ENCODE measurements at regions of chr5 and their contacts with region 1.

Region 1: GRCh38 chr5:174945853-174946252 is 221.5 kb downstream of the MSX2 start:
- DNase-seq: no peak
- ATAC-seq: no peak
- H3K4me3 ChIP-seq: no peak overlapping the region
- H3K27ac ChIP-seq: no peak overlapping the region
- H3K4me1 ChIP-seq: no peaks in the 10 kb centered on the region
- H3K27me3 ChIP-seq: peaks cover 0 to 65% (median 23%) of the 10 kb centered on the region in 7 donors
- CTCF ChIP-seq: no peak

Region 2: DNA sequence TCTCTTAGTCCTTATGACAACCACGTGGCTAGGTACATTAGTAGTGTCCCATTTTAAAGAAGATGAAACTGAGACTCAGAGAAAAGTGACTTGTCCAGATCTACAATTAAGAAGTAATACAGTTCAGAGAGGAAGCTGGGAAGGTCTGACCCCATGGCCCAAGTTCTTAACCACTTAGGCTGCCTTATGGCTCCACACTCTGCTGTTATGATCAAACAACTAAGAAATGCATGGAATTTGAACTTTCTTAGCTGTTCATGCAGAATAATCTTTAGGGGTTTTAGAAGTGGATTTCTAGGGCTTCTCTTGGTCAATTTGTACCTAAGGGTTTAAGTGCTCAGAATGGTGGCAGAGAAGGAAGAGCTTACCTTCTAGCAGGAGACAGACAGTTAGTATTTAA is 349.4 kb before region 1 on chr5:
- intact Hi-C with region 1: no loop called
- DNase-seq: no peak
- ATAC-seq: no peak
- H3K4me3 ChIP-seq: no peak overlapping the region
- H3K27ac ChIP-seq: no peak overlapping the region
- H3K4me1 ChIP-seq: no peaks in the 10 kb centered on the region
- H3K27me3 ChIP-seq: peaks cover 0 to 45% (median 24%) of the 10 kb centered on the region in 7 donors
- CTCF ChIP-seq: no peak

Region 3: DNA sequence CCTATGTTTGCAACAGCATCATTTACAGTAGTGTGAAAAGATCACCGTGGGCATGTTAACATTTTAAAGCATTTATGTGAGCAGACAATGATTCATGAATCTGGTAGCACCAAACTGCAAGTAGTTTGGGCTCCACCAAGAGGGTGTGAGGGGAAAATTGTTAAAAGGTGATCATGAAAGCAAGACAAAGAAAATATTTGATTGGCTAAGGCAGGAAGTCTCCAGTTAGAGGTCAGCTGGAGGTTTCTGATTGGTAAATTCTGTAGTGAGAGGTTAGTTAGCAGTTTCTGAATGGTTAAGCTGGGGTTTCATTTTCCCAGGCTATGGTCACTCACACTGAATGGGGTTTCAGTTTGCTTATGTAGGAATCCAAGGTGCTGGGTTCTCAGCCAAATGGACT is 511.6 kb after region 1 on chr5:
- intact Hi-C with region 1: loop called in 6 of 10 experiments (anchors 5 kb)
- DNase-seq: no peak
- ATAC-seq: no peak
- H3K4me3 ChIP-seq: no peak overlapping the region
- H3K27ac ChIP-seq: no peak overlapping the region
- H3K4me1 ChIP-seq: no peaks in the 10 kb centered on the region
- H3K27me3 ChIP-seq: peaks cover 0 to 61% (median 52%) of the 10 kb centered on the region in 7 donors
- CTCF ChIP-seq: no peak

Region 4: DNA sequence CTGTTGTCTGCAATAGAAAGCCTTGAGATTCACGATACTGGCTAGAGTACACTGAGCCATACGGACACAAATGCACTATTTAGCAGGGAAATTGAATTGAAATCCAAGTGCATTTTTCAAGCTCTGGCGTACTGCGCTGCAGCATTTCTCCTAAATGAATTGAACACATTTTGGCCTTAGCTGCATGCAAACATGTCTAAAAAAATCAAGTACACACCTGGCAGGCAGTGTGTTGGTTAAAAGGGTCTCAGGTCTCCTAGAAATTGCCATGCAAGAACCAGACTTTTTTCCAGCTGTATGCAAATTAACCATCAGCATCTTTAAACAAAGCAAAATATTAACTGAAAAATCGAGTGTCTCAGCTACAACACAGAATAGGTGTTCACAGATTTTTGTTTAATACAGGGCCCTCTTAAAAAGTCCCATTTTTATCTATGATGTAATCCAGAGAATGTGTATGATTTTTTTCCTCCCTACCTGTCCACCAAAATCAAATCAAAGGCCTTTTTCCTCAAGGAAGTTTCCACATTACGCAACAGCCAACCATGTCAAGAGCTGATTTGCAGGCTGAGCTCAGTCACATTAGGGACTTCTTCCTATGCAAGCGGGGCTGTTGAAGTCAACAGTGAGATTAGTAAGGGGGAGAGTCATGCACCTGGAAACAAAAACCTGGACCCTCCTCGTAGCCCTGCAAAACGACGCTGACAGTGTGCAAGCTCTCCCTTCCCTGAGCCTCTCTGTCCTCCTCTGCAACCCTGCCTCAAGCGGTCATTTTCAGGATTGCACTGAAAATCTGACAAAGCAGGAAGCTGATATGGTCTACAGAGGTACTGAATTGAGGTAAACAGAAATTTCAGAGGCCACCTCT is 518.5 kb after region 1 on chr5:
- intact Hi-C with region 1: loop called in 6 of 10 experiments (anchors 5 kb)
- DNase-seq: no peak
- ATAC-seq: peak in 4 of 8 donors; percentile 67 to 70 (median 67)
- H3K4me3 ChIP-seq: no peak overlapping the region
- H3K27ac ChIP-seq: no peak overlapping the region
- H3K4me1 ChIP-seq: no peaks in the 10 kb centered on the region
- H3K27me3 ChIP-seq: peaks cover 0 to 25% (median 11%) of the 10 kb centered on the region in 7 donors
- CTCF ChIP-seq: peak; percentile 49 to 72 (median 68)